IMR-90 (cell line): ENCODE measurements at regions of chr18 and their contacts with region 1.

Region 1: GRCh38 chr18:24397694-24398365 is at the start of gene OSBPL1A:
- DNase-seq: peak; percentile 85
- ATAC-seq: peak; percentile 93
- H3K4me3 ChIP-seq: peak within 1 kb of the TSS; percentile 56
- H3K27ac ChIP-seq: peak within 1 kb of the TSS; percentile 56
- H3K4me1 ChIP-seq: 0 out of 2 replicates have a peak, but pooled peaks cover 2% of the 10 kb centered on the region
- H3K27me3 ChIP-seq: no peaks in the 10 kb centered on the region
- CTCF ChIP-seq: 0 out of 2 replicates have a peak, but pooled peaks have one; percentile 1
- POLR2A ChIP-seq: peak; percentile 59
- RAD21 ChIP-seq: no peak
- total RNA-seq, gene OSBPL1A: 50.3 and 70.4 TPM in 2 replicates

Region 2: DNA sequence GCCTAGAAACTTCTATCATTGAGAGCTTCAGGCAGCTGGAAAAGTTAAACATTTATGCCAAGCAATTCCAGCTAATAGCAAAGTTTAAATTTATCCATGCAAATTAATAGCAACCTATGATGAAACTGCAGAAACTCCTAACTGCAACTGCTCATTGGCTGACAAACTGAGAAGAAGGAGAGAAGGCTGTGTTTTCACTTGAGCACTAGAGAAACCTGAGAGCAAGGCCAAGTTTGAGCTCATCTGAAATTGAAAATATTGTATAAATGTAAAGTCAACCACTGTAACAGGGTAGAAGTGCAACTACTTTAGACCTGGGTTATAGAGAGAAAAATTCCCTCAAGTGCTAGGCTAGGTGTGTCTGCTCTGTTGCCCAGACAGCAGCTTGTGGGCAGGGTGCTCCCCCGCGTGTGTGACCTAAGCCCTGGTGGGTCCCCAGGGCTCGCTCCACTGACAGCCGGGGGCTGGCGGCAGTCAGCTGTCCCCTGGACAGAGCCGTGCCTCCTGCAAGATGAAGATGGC is 208.8 kb before region 1 on chr18:
- CTCF ChIA-PET with region 1: no interaction called
- POLR2A ChIA-PET with region 1: interaction called, 10 read pairs
- dilution Hi-C with region 1: no loop called
- in situ Hi-C with region 1: no loop called
- intact Hi-C with region 1: no loop called
- DNase-seq: peak; percentile 70
- ATAC-seq: peak; percentile 85
- H3K4me3 ChIP-seq: no peak overlapping the region
- H3K27ac ChIP-seq: no peak overlapping the region
- H3K4me1 ChIP-seq: peaks cover 6% of the 10 kb centered on the region
- H3K27me3 ChIP-seq: no peaks in the 10 kb centered on the region
- CTCF ChIP-seq: no peak
- POLR2A ChIP-seq: no peak
- RAD21 ChIP-seq: no peak

Region 3: GRCh38 chr18:24362758-24363157 is 35.1 kb before region 1 on chr18:
- CTCF ChIA-PET with region 1: no interaction called
- POLR2A ChIA-PET with region 1: no interaction called
- dilution Hi-C with region 1: no loop called
- in situ Hi-C with region 1: no loop called
- intact Hi-C with region 1: loop called (anchors 5 kb)
- DNase-seq: peak; percentile 6
- ATAC-seq: peak; percentile 66
- H3K4me3 ChIP-seq: no peak overlapping the region
- H3K27ac ChIP-seq: no peak overlapping the region
- H3K4me1 ChIP-seq: 0 out of 2 replicates have a peak, but pooled peaks cover 1% of the 10 kb centered on the region
- H3K27me3 ChIP-seq: no peaks in the 10 kb centered on the region
- CTCF ChIP-seq: no peak
- POLR2A ChIP-seq: no peak
- RAD21 ChIP-seq: no peak

Region 4: GRCh38 chr18:24446953-24447538 is 49.2 kb after region 1 on chr18:
- CTCF ChIA-PET with region 1: no interaction called
- POLR2A ChIA-PET with region 1: interaction called, 15 read pairs
- dilution Hi-C with region 1: no loop called
- in situ Hi-C with region 1: no loop called
- intact Hi-C with region 1: no loop called
- DNase-seq: no peak
- ATAC-seq: no peak
- H3K4me3 ChIP-seq: no peak overlapping the region
- H3K27ac ChIP-seq: no peak overlapping the region
- H3K4me1 ChIP-seq: no peaks in the 10 kb centered on the region
- H3K27me3 ChIP-seq: no peaks in the 10 kb centered on the region
- CTCF ChIP-seq: 0 out of 2 replicates have a peak, but pooled peaks have one; percentile 16
- POLR2A ChIP-seq: no peak
- RAD21 ChIP-seq: no peak